Naive thymus-derived CD4-positive, alpha-beta T cell (primary cell): ENCODE measurements at regions of chr12 and their contacts with region 1.

Region 1: DNA sequence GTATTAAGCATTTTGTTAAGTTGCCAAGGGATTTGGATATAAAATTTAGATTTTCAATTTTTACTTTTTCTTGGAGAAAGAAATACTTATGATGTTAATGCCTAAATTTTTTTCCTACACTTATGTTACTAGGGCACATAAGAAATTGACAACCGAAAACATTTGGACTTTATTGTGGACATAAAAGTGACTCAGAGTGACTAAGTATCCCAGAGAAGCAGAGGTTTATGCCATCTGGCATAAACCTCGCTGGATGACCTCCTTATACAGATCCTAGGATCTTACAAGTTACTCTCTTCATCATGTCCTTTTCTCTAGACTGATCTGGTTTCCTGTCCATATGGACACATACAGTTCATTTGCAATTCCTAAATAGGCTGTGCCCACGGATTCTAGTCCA is 89.8 kb downstream of the RERG start:
- DNase-seq: no peak
- ATAC-seq: no peak
- H3K4me3 ChIP-seq: no peak overlapping the region
- H3K4me3 Mint-ChIP-seq: no peak overlapping the region
- H3K27ac ChIP-seq: no peak overlapping the region
- H3K27ac Mint-ChIP-seq: no peak overlapping the region
- H3K4me1 ChIP-seq: no peaks in the 10 kb centered on the region
- H3K4me1 Mint-ChIP-seq: no peaks in the 10 kb centered on the region
- H3K27me3 ChIP-seq: no peaks in the 10 kb centered on the region
- H3K27me3 Mint-ChIP-seq: peaks cover 9 to 22% (median 20%) of the 10 kb centered on the region in 5 donors

Region 2: DNA sequence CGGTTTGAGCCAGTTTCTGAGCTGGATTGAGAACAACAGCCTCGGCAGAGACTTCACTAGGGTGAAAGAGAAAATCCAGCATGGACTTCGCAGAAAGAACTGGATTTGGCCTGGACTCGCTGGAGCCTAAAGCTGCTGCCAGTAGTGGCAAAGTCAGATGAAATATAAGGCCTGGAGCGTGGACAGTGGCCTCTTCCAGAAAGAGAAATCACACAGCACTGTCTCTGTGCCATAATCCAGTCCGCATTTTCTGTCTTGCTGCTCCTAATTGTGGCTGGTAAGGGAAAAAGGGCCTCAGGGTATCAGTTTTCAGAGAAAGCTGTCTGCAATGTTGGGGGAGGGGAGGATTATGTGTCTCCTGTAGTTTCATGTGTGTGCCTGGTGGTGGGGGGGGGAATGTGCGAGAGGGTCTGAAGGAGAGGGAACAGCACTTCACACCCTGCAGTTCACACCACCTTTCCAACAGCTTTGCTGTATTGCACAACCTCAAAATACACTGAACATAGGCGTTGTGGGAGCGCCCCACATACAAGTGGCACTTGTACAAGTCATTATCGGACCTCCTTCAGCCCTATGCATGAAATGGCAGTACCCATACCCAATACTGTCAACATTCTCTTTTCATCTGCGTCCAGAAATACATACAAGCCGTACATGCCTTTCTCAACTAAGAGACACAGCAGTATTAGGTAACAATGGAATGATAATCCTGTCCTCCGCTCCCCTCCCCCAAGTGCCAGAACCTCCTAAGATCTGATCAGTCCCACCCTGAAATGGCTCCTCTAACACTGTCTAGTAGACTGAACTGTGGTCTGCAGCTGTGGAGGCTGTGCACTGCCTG is 873.5 kb before region 1 on chr12:
- CTCF ChIA-PET with region 1: no interaction called
- POLR2A ChIA-PET with region 1: no interaction called
- intact Hi-C with region 1: no loop called
- DNase-seq: peak; percentile 49 to 85 (median 79)
- ATAC-seq: peak; percentile 72
- H3K4me3 ChIP-seq: peak overlapping the region; percentile 31
- H3K4me3 Mint-ChIP-seq: peak overlapping the region; percentile 67 to 81 (median 77)
- H3K27ac ChIP-seq: peak overlapping the region; percentile 65
- H3K27ac Mint-ChIP-seq: peak overlapping the region; percentile 89 to 99 (median 98)
- H3K4me1 ChIP-seq: peaks cover 37 to 38% of the 10 kb centered on the region in 2 donors
- H3K4me1 Mint-ChIP-seq: peaks cover 39 to 66% (median 61%) of the 10 kb centered on the region in 7 donors
- H3K27me3 ChIP-seq: no peaks in the 10 kb centered on the region
- H3K27me3 Mint-ChIP-seq: no peaks in the 10 kb centered on the region

Region 3: DNA sequence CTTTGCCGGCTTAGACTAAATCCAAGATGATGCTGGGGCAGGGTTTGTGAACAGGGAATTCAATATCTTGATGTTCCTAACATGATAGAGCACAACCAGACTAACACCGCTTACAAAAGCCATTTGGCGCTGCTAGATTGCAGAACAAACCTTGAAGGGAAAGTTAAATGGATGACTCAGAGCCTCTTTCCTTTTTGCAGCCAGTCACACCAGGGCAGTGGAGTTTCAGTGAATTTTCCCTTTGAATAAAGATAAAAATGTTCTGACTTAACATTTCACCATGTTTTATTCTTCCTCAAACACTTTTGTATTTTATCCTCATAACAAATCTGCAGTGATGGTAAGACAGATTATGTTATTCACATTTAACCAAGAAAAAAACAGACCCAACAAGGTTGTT is 111.3 kb before region 1 on chr12:
- CTCF ChIA-PET with region 1: no interaction called
- POLR2A ChIA-PET with region 1: no interaction called
- intact Hi-C with region 1: loop called in 1 of 2 experiments (anchors 5 kb)
- DNase-seq: no peak
- ATAC-seq: no peak
- H3K4me3 ChIP-seq: no peak overlapping the region
- H3K4me3 Mint-ChIP-seq: no peak overlapping the region
- H3K27ac ChIP-seq: no peak overlapping the region
- H3K27ac Mint-ChIP-seq: no peak overlapping the region
- H3K4me1 ChIP-seq: no peaks in the 10 kb centered on the region
- H3K4me1 Mint-ChIP-seq: no peaks in the 10 kb centered on the region
- H3K27me3 ChIP-seq: no peaks in the 10 kb centered on the region
- H3K27me3 Mint-ChIP-seq: peaks cover 0 to 35% (median 10%) of the 10 kb centered on the region in 5 donors

Region 4: DNA sequence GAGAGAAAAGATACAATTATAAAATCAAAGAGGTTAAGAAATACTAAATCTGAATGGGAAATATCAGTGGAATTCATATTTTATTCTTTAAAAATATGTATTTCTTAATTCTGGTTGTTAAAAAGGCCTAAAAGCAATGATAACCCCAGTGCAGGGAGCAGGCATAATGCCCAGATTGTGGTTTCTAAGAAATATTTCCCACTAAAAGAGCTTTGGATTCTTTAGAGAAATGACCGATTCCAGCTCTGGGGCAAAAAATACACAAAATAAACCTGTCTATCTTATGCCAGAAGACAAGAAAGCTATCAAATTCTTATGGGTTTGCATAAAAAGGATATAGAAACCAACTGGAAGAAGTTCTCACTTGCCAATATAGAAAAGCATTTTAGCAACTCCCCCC is 87.0 kb before region 1 on chr12:
- CTCF ChIA-PET with region 1: no interaction called
- POLR2A ChIA-PET with region 1: no interaction called
- intact Hi-C with region 1: no loop called
- DNase-seq: no peak
- ATAC-seq: no peak
- H3K4me3 ChIP-seq: no peak overlapping the region
- H3K4me3 Mint-ChIP-seq: no peak overlapping the region
- H3K27ac ChIP-seq: no peak overlapping the region
- H3K27ac Mint-ChIP-seq: no peak overlapping the region
- H3K4me1 ChIP-seq: no peaks in the 10 kb centered on the region
- H3K4me1 Mint-ChIP-seq: peaks cover 0 to 6% (median 0%) of the 10 kb centered on the region in 7 donors
- H3K27me3 ChIP-seq: no peaks in the 10 kb centered on the region
- H3K27me3 Mint-ChIP-seq: peaks cover 0 to 27% (median 18%) of the 10 kb centered on the region in 5 donors